Activated CD4-positive, alpha-beta T cell treated with anti-CD3 and anti-CD28 coated beads for 36 hours (primary cell): ENCODE measurements at regions of chr1 and their contacts with region 1.

Region 1: DNA sequence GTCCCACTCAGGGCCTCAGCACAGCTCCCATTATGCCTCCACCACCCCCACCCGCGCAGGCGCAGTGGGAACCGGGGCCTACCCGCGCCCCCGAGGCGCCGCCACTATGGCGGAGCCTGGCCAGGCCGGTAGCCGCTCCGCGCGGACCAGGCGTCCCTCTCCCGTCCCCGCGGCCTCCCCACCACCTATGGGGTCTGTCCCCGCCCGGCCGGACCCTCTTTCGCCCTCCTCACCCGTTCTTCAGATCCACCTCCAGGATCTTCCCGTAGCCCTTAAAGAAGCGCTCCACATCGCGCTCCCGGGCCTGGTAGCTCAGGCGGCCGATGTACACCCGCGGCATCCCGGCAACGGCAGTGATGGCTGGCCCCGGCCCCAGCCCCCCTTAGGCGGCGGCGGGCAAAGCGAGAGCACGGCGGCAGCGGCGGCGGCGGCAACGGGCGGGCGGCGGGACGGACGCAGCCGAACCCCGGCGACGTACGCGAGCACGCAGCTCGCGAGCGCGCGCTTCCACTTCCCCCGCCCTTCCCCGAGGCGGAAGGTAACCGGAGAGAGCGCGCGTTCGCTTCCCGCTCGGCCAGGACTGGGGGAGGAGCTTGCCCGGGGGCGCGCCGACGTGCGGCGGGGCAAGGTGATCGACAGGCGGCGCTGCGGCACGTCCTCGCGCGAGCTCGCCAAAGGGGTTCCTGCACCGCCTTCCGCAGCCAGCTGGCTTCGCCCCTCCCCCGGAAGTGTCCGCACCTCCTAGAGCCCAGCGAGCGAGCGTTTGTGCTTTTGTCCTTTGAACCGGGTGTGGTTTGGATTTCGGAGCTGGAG is at the start of gene SRSF4:
- DNase-seq: peak; percentile 100
- ATAC-seq: peak; percentile 91
- H3K4me3 Mint-ChIP-seq: peak within 1 kb of the TSS; percentile 87
- H3K27ac Mint-ChIP-seq: peak within 1 kb of the TSS; percentile 99
- H3K4me1 Mint-ChIP-seq: peaks cover 39% of the 10 kb centered on the region
- H3K27me3 Mint-ChIP-seq: no peaks in the 10 kb centered on the region
- total RNA-seq, gene SRSF4: 129 to 147 TPM

Region 2: DNA sequence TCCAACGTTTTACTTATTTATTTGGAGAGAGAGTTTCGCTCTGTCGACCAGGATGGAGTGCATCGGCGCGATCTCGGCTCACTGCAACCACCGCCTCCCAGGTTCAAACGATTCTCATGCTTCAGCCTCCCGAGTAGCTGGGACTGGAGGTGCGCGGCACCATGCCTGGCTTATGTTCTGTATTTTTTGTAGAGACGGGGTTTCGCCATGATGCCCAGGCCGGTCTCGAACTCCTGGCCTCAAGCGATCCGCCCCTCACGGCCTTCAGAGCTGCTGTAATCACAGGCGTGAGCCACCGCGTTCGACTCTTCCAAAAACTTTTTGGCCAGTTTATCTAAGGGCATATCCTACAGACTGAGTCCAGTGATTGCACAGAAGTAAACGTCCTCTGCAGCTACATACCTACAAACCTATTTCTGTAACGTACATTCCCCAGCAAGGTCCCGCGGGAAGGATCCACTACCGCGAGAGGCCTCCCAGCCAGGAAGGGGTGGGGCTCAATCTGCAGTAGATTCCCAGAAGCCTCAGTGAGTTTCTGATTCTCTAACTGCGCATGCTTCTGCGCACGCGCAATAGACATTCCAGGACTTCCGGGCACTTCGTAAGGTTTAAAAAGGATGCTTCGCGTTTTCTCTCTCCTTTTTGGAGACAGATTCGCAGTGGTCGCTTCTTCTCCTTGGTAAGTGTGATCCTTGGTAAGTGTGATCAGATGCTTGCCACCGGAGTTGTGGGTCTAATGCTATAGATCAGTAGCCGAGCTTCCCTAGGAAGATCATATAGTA is 676.0 kb before region 1 on chr1 and contains the start of gene RCC1:
- CTCF ChIA-PET with region 1: no interaction called
- POLR2A ChIA-PET with region 1: no interaction called
- intact Hi-C with region 1: loop called in 1 of 2 experiments (anchors 2 kb)
- DNase-seq: peak; percentile 97
- ATAC-seq: peak; percentile 85
- H3K4me3 Mint-ChIP-seq: peak within 1 kb of the TSS; percentile 98
- H3K27ac Mint-ChIP-seq: peak within 1 kb of the TSS; percentile 99
- H3K4me1 Mint-ChIP-seq: peaks cover 26% of the 10 kb centered on the region
- H3K27me3 Mint-ChIP-seq: peaks cover 1% of the 10 kb centered on the region
- total RNA-seq, gene RCC1: 103 to 107 TPM

Region 3: GRCh38 chr1:28648474-28649198 is 533.0 kb before region 1 on chr1 and contains the start of gene RNU11:
- CTCF ChIA-PET with region 1: no interaction called
- POLR2A ChIA-PET with region 1: interaction called, 15 read pairs
- intact Hi-C with region 1: loop called in 1 of 2 experiments (anchors 1 kb)
- DNase-seq: peak; percentile 93
- ATAC-seq: peak; percentile 83
- H3K4me3 Mint-ChIP-seq: peak within 1 kb of the TSS; percentile 83
- H3K27ac Mint-ChIP-seq: peak within 1 kb of the TSS; percentile 100
- H3K4me1 Mint-ChIP-seq: peaks cover 34% of the 10 kb centered on the region
- H3K27me3 Mint-ChIP-seq: no peaks in the 10 kb centered on the region
- total RNA-seq, gene RNU11: not detected

Region 4: GRCh38 chr1:28914228-28915030 is 267.2 kb before region 1 on chr1 and contains the start of gene EPB41:
- CTCF ChIA-PET with region 1: no interaction called
- POLR2A ChIA-PET with region 1: interaction called, 11 read pairs
- intact Hi-C with region 1: loop called in 1 of 2 experiments (anchors 1 kb)
- DNase-seq: peak; percentile 94
- ATAC-seq: peak; percentile 84
- H3K4me3 Mint-ChIP-seq: peak within 1 kb of the TSS; percentile 86
- H3K27ac Mint-ChIP-seq: peak within 1 kb of the TSS; percentile 93
- H3K4me1 Mint-ChIP-seq: peaks cover 47% of the 10 kb centered on the region
- H3K27me3 Mint-ChIP-seq: no peaks in the 10 kb centered on the region
- total RNA-seq, gene EPB41: 75.5 to 130 TPM

Region 5: DNA sequence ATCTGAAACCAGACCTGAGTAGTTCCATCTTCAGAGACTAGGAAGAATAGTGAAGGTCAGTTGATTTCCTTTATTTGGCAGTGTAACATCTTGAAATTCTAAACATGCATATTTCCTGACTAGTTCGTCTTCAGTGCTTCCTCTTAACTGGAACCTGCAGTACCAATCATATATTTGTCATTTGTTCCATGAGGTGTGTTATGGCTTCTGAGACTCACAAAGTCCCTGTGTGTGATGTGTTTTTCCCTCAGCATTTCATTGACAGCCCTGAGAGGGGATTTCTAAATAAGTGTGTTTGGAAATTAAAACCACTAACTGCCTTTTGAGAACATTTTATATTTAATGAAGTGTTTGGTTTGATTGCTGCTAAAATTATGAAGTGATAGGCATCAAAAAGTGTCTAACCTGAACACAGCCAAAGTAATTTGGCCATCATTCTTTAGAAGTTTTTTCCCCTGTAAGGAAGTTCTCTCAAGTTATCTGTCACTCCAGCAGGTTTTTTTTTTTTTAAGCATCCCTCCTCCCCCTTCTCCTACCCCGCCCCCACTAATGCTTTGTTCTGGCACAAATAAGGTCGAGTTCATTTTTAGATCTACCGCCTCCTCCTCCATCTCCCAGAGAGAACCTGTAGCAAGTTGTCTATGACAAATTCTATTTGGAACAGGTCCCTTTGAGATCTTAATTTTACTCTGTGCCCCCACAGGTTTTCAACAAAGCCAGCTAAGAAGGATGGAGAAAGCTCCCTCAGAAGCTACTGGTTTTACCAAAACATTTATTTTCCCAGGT is 119.3 kb before region 1 on chr1:
- CTCF ChIA-PET with region 1: no interaction called
- POLR2A ChIA-PET with region 1: interaction called, 3 read pairs
- intact Hi-C with region 1: loop called in 1 of 2 experiments (anchors 1 kb)
- DNase-seq: peak; percentile 66
- ATAC-seq: peak; percentile 90
- H3K4me3 Mint-ChIP-seq: peak overlapping the region; percentile 56
- H3K27ac Mint-ChIP-seq: peak overlapping the region; percentile 99
- H3K4me1 Mint-ChIP-seq: peaks cover 59% of the 10 kb centered on the region
- H3K27me3 Mint-ChIP-seq: no peaks in the 10 kb centered on the region

Region 6: DNA sequence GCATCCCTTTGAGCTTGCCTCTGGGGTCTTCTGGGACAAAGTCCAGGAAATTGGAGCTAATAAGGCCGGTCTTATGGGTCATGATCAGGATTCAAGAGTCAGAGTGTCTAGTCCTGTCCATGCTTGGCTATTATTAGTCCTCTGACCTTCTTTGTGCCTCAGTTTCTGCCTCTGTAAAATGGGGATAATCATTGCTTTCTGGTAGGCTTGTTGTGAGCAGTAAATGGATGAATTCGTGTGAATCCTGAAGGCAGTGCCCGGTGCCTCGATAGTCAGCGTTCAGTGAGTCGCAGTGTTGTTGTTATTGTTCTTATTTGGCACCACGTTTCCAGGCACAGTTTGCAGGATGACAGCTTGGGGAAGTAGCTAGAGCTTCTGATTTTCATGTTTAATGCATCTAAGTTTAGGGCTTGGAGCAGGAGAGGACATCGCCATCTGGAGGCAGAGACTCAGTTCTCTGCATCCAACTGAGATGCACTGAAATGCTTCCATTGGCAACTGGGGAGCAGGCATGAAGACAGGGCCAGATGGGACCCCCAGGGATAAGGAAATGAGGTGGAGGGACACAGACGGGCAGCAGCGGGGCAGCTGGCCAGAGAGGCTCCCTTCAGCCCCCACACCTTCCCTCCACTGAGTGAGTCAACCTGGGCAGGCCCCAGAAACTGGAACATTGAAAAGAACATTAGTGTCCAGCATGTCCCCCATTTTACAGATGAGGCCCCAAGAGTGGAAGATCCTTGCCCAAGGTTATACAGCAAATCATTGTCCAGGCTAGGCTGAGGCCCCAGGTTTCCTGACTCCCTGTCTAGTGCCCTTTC is 215.0 kb after region 1 on chr1:
- CTCF ChIA-PET with region 1: no interaction called
- POLR2A ChIA-PET with region 1: no interaction called
- intact Hi-C with region 1: no loop called
- DNase-seq: no peak
- ATAC-seq: no peak
- H3K4me3 Mint-ChIP-seq: no peak overlapping the region
- H3K27ac Mint-ChIP-seq: no peak overlapping the region
- H3K4me1 Mint-ChIP-seq: no peaks in the 10 kb centered on the region
- H3K27me3 Mint-ChIP-seq: peaks cover 10% of the 10 kb centered on the region

Region 7: GRCh38 chr1:30718636-30719405 is 1537.2 kb after region 1 on chr1:
- CTCF ChIA-PET with region 1: no interaction called
- POLR2A ChIA-PET with region 1: interaction called, 4 read pairs
- intact Hi-C with region 1: loop called in 1 of 2 experiments (anchors 1 kb)
- DNase-seq: peak; percentile 91
- ATAC-seq: peak; percentile 66
- H3K4me3 Mint-ChIP-seq: peak overlapping the region; percentile 84
- H3K27ac Mint-ChIP-seq: peak overlapping the region; percentile 94
- H3K4me1 Mint-ChIP-seq: peaks cover 19% of the 10 kb centered on the region
- H3K27me3 Mint-ChIP-seq: no peaks in the 10 kb centered on the region